CD4-positive, alpha-beta T cell (primary cell): ENCODE measurements at regions of chr10 and their contacts with region 1.

Region 1: GRCh38 chr10:6580279-6581029 is 378 bp upstream of the PRKCQ start:
- DNase-seq: peak; percentile 65 to 93 (median 86)
- ATAC-seq: peak; percentile 63
- H3K4me3 ChIP-seq: peak overlapping the region; percentile 87
- H3K4me3 Mint-ChIP-seq: peak overlapping the region; percentile 94
- H3K27ac ChIP-seq: peak overlapping the region; percentile 67 to 93
- H3K27ac Mint-ChIP-seq: peak overlapping the region; percentile 94
- H3K4me1 ChIP-seq: peaks cover 43% of the 10 kb centered on the region
- H3K4me1 Mint-ChIP-seq: peaks cover 80% of the 10 kb centered on the region
- H3K27me3 ChIP-seq: no peaks in the 10 kb centered on the region
- H3K27me3 Mint-ChIP-seq: no peaks in the 10 kb centered on the region
- CTCF ChIP-seq: peak; percentile 32

Region 2: DNA sequence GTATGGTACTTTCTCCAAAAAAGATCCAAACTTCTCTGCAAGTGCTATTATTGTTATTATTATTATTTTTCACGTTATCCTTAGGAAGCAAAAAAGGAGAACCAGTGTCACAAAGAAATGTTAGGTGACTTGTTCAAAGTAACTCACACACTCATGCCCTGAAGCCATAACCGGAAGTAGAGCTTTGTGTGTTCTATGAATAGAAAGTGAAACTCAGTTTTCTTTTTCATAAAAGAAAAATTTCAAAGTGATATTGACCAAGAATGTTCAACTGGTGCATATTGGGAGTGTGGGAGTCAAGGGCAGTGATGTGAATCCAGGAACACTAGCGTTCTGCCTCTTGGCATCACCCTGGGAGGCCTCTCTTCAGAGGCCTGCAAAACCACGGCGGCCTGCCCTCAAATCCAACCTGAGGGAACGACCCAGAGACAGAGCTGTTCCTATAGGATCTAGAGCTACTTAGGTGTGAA is 106.5 kb before region 1 on chr10:
- CTCF ChIA-PET with region 1: interaction called, 6 read pairs
- POLR2A ChIA-PET with region 1: interaction called, 13 read pairs
- intact Hi-C with region 1: loop called (anchors 1 to 5 kb)
- DNase-seq: peak in 6 of 14 experiments; percentile 25 to 85 (median 56)
- ATAC-seq: peak; percentile 75
- H3K4me3 ChIP-seq: peak overlapping the region; percentile 47
- H3K4me3 Mint-ChIP-seq: peak overlapping the region; percentile 83
- H3K27ac ChIP-seq: peak overlapping the region; percentile 69 to 75
- H3K27ac Mint-ChIP-seq: peak overlapping the region; percentile 95
- H3K4me1 ChIP-seq: peaks cover 23% of the 10 kb centered on the region
- H3K4me1 Mint-ChIP-seq: peaks cover 65% of the 10 kb centered on the region
- H3K27me3 ChIP-seq: no peaks in the 10 kb centered on the region
- H3K27me3 Mint-ChIP-seq: no peaks in the 10 kb centered on the region
- CTCF ChIP-seq: no peak

Region 3: DNA sequence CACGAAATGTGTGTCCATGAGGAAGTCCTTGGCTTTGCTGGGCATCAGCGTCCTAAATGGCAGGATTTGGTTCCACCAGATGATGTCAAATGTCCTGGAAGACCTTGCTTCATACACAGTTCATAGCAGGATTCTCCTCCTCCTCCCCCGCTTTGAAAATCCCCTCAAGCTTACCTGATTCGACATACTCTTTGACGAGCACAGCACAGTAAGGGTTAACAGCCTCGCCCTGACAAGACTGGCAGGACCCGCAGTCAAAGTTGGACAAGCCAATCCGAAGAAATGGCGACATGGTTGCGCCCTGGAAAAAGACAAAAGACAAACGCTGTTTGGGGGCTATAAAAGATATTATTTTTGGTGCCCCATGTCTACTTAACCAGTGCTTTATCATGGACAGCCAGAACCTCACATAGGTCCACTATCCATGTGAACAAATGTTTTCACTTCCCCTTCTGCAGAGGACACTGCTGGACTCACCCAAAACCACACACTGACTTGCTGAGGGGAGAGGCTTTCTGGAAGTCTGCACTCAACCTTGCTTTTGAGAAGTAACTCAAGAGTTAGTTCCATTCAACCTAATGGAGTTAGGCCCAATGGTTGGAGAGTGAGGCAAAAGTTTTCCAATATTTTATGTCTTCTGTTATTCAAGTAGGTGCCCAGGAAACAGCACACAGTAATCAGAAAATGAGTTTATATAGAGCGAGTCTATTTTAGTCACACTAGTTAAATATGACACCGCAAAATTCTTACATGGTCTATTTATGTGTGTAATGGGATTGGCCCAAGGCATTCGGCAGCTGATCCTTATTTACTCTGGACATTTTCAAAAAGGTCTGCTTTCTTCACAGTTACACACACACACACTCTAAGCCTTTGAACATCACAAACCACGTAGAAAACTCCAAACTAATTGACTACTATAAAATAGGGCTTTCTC is 65.3 kb before region 1 on chr10:
- CTCF ChIA-PET with region 1: interaction called, 5 read pairs
- POLR2A ChIA-PET with region 1: interaction called, 4 read pairs
- intact Hi-C with region 1: loop called in 1 of 2 experiments (anchors 2 kb)
- DNase-seq: no peak
- ATAC-seq: no peak
- H3K4me3 ChIP-seq: no peak overlapping the region
- H3K4me3 Mint-ChIP-seq: no peak overlapping the region
- H3K27ac ChIP-seq: no peak overlapping the region
- H3K27ac Mint-ChIP-seq: peak overlapping the region; percentile 76
- H3K4me1 ChIP-seq: peaks cover 52% of the 10 kb centered on the region
- H3K4me1 Mint-ChIP-seq: peaks cover 89% of the 10 kb centered on the region
- H3K27me3 ChIP-seq: no peaks in the 10 kb centered on the region
- H3K27me3 Mint-ChIP-seq: no peaks in the 10 kb centered on the region
- CTCF ChIP-seq: no peak

Region 4: GRCh38 chr10:6542999-6543430 is 37.4 kb before region 1 on chr10:
- CTCF ChIA-PET with region 1: interaction called, 6 read pairs
- POLR2A ChIA-PET with region 1: interaction called, 39 read pairs
- intact Hi-C with region 1: loop called in 1 of 2 experiments (anchors 1 kb)
- DNase-seq: peak; percentile 37 to 85 (median 58)
- ATAC-seq: peak; percentile 84
- H3K4me3 ChIP-seq: peak overlapping the region; percentile 47
- H3K4me3 Mint-ChIP-seq: peak overlapping the region; percentile 89
- H3K27ac ChIP-seq: peak overlapping the region; percentile 86 to 88
- H3K27ac Mint-ChIP-seq: peak overlapping the region; percentile 97
- H3K4me1 ChIP-seq: peaks cover 73% of the 10 kb centered on the region
- H3K4me1 Mint-ChIP-seq: peaks cover 86% of the 10 kb centered on the region
- H3K27me3 ChIP-seq: no peaks in the 10 kb centered on the region
- H3K27me3 Mint-ChIP-seq: no peaks in the 10 kb centered on the region
- CTCF ChIP-seq: no peak

Region 5: GRCh38 chr10:6593241-6593671 is 12.8 kb after region 1 on chr10:
- CTCF ChIA-PET with region 1: interaction called, 31 read pairs
- POLR2A ChIA-PET with region 1: interaction called, 104 read pairs
- intact Hi-C with region 1: loop called in 1 of 2 experiments (anchors 1 kb)
- DNase-seq: peak in 5 of 14 experiments; percentile 16 to 64 (median 50)
- ATAC-seq: peak; percentile 67
- H3K4me3 ChIP-seq: no peak overlapping the region
- H3K4me3 Mint-ChIP-seq: peak overlapping the region; percentile 66
- H3K27ac ChIP-seq: peak overlapping the region; percentile 79 to 83
- H3K27ac Mint-ChIP-seq: peak overlapping the region; percentile 94
- H3K4me1 ChIP-seq: peaks cover 54% of the 10 kb centered on the region
- H3K4me1 Mint-ChIP-seq: peaks cover 97% of the 10 kb centered on the region
- H3K27me3 ChIP-seq: no peaks in the 10 kb centered on the region
- H3K27me3 Mint-ChIP-seq: no peaks in the 10 kb centered on the region
- CTCF ChIP-seq: no peak

Region 6: DNA sequence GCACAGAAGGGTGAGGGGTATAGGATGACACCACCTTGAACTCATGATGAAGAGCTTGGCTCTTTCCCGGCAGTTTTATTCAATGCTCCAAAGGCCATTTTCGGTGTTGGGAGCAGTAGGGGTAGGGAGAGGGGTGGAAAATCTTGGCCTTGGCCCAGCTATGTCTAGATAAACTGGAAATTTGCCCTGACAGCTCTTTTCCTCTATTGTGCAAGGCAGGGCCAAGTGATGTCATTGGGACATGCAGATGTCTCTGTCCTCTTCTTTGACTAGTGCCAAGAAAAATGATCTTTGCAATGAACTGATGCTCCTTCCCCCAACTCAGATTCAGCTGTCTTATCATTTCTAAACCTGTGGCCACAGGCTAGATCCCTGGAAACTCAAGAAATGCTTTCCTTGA is 27.3 kb after region 1 on chr10:
- CTCF ChIA-PET with region 1: interaction called, 55 read pairs
- POLR2A ChIA-PET with region 1: interaction called, 104 read pairs
- intact Hi-C with region 1: loop called in 1 of 2 experiments (anchors 5 kb)
- DNase-seq: no peak
- ATAC-seq: no peak
- H3K4me3 ChIP-seq: no peak overlapping the region
- H3K4me3 Mint-ChIP-seq: no peak overlapping the region
- H3K27ac ChIP-seq: peak overlapping the region in 1 of 2 donors; percentile 72
- H3K27ac Mint-ChIP-seq: peak overlapping the region; percentile 90
- H3K4me1 ChIP-seq: peaks cover 18% of the 10 kb centered on the region
- H3K4me1 Mint-ChIP-seq: peaks cover 80% of the 10 kb centered on the region
- H3K27me3 ChIP-seq: no peaks in the 10 kb centered on the region
- H3K27me3 Mint-ChIP-seq: no peaks in the 10 kb centered on the region
- CTCF ChIP-seq: no peak

Region 7: GRCh38 chr10:6667679-6668270 is 87.3 kb after region 1 on chr10:
- CTCF ChIA-PET with region 1: interaction called, 16 read pairs
- POLR2A ChIA-PET with region 1: interaction called, 5 read pairs
- intact Hi-C with region 1: loop called (anchors 1 to 5 kb)
- DNase-seq: peak in 11 of 14 experiments; percentile 7 to 61 (median 23)
- ATAC-seq: no peak
- H3K4me3 ChIP-seq: no peak overlapping the region
- H3K4me3 Mint-ChIP-seq: no peak overlapping the region
- H3K27ac ChIP-seq: no peak overlapping the region
- H3K27ac Mint-ChIP-seq: no peak overlapping the region
- H3K4me1 ChIP-seq: peaks cover 3% of the 10 kb centered on the region
- H3K4me1 Mint-ChIP-seq: peaks cover 31% of the 10 kb centered on the region
- H3K27me3 ChIP-seq: no peaks in the 10 kb centered on the region
- H3K27me3 Mint-ChIP-seq: no peaks in the 10 kb centered on the region
- CTCF ChIP-seq: peak; percentile 78